CD8-positive, alpha-beta T cell (primary cell): ENCODE measurements at regions of chr18 and their contacts with region 1.

Region 1: GRCh38 chr18:63867368-63867767 is 20.1 kb upstream of the SERPINB2 start:
- DNase-seq: no peak
- ATAC-seq: no peak
- H3K4me3 ChIP-seq: no peak overlapping the region
- H3K4me3 Mint-ChIP-seq: no peak overlapping the region
- H3K27ac ChIP-seq: no peak overlapping the region
- H3K27ac Mint-ChIP-seq: no peak overlapping the region
- H3K4me1 ChIP-seq: no peaks in the 10 kb centered on the region
- H3K4me1 Mint-ChIP-seq: no peaks in the 10 kb centered on the region
- H3K27me3 ChIP-seq: no peaks in the 10 kb centered on the region
- H3K27me3 Mint-ChIP-seq: no peaks in the 10 kb centered on the region
- CTCF ChIP-seq: no peak

Region 2: GRCh38 chr18:62460851-62461300 is 1406.5 kb before region 1 on chr18:
- CTCF ChIA-PET with region 1: no interaction called
- POLR2A ChIA-PET with region 1: no interaction called
- intact Hi-C with region 1: no loop called
- DNase-seq: no peak
- ATAC-seq: no peak
- H3K4me3 ChIP-seq: no peak overlapping the region
- H3K4me3 Mint-ChIP-seq: no peak overlapping the region
- H3K27ac ChIP-seq: no peak overlapping the region
- H3K27ac Mint-ChIP-seq: no peak overlapping the region
- H3K4me1 ChIP-seq: no peaks in the 10 kb centered on the region
- H3K4me1 Mint-ChIP-seq: no peaks in the 10 kb centered on the region
- H3K27me3 ChIP-seq: no peaks in the 10 kb centered on the region
- H3K27me3 Mint-ChIP-seq: peaks cover 3% of the 10 kb centered on the region
- CTCF ChIP-seq: no peak

Region 3: DNA sequence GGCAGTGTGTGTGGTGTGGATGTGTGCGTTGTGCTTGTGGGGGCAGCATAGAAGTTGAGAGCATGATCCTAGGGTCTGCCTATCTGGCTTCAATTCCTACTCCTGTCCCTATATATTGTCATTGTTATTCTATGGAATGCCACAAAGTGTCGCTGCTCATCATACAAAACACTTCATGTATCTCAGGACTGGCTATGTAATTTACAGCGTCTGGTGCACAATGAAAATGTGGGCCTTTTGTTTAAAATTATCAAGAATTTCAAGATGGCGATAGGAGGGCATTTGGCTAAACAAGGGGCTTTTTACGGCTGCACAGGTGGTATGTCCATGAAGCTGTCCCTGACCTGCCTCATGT is 23.6 kb after region 1 on chr18:
- CTCF ChIA-PET with region 1: no interaction called
- POLR2A ChIA-PET with region 1: no interaction called
- intact Hi-C with region 1: loop called in 1 of 2 experiments (anchors 2 kb)
- DNase-seq: peak in 1 of 9 experiments; percentile 4
- ATAC-seq: no peak
- H3K4me3 ChIP-seq: no peak overlapping the region
- H3K4me3 Mint-ChIP-seq: no peak overlapping the region
- H3K27ac ChIP-seq: no peak overlapping the region
- H3K27ac Mint-ChIP-seq: no peak overlapping the region
- H3K4me1 ChIP-seq: no peaks in the 10 kb centered on the region
- H3K4me1 Mint-ChIP-seq: no peaks in the 10 kb centered on the region
- H3K27me3 ChIP-seq: no peaks in the 10 kb centered on the region
- H3K27me3 Mint-ChIP-seq: peaks cover 15% of the 10 kb centered on the region
- CTCF ChIP-seq: no peak